Activated T-helper 2 cell treated with anti-CD3 and anti-CD28 coated beads, Interferon-gamma antibody, Interleukin-2, Interleukin-4, amounts not matched to agents 10 μg/mL and 5 μg/mL and 100 μg/mL, durations not matched to agents 14 hours and 24 hours and 36 hours (primary cell): ENCODE measurements at regions of chr19 and their contacts with region 1.

Region 1: DNA sequence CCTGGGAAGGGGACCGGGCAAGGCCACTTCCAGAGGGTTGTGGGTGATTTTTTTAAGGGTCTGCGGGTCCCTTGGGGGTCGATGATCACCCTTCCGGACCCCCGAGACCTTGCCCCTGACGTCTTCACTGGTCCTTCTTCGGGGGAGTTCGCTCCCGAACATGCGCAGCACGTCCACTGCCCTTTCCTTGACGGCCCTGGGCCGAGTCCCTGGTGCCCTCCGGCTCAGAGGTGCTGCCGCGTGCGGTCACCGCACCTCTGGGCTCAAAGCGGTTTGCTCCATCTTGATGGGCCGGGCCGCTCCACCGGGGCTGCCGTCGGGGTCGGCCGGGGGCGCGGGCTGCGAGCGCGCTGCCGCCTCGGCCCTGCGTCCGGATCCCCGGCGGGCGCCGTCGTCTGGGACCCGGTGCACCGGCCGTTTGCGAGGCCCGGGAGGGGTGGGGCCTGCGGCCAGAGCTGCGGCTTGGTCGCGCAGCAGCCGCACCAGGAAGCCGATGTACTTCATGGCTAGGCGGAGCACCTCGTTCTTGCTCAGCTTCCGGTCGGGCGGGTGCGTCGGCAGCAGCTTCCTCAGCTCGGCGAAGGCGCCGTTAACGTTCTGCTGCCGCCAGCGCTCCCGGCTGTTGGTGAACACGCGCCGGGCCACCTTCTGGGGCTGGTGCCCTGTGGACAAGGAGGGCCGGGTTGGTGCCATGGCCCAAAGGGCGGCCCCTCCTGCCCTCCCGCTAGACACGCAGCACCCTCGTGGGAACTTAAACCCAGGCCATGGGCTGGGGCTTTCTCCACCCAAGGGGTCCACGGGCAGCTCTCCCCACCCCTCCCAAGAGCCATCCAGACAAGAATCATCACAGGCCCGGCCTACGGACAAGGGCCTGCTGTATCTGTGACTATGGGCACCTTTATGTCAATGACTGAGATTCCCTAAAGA is 3.3 kb downstream of the LYL1 start:
- DNase-seq: peak; percentile 83
- H3K4me3 Mint-ChIP-seq: peak overlapping the region; percentile 84
- H3K27ac Mint-ChIP-seq: peak overlapping the region; percentile 92
- H3K4me1 Mint-ChIP-seq: peaks cover 43% of the 10 kb centered on the region
- H3K27me3 Mint-ChIP-seq: peaks cover 26% of the 10 kb centered on the region

Region 2: GRCh38 chr19:12617646-12618045 is 481.7 kb before region 1 on chr19:
- intact Hi-C with region 1: no loop called
- DNase-seq: no peak
- H3K4me3 Mint-ChIP-seq: no peak overlapping the region
- H3K27ac Mint-ChIP-seq: no peak overlapping the region
- H3K4me1 Mint-ChIP-seq: peaks cover 19% of the 10 kb centered on the region
- H3K27me3 Mint-ChIP-seq: no peaks in the 10 kb centered on the region

Region 3: GRCh38 chr19:12838182-12838885 is 261.0 kb before region 1 on chr19 and contains the start of gene MAST1:
- intact Hi-C with region 1: loop called (anchors 5 kb)
- DNase-seq: peak; percentile 51
- H3K4me3 Mint-ChIP-seq: peak within 1 kb of the TSS; percentile 72
- H3K27ac Mint-ChIP-seq: peak within 1 kb of the TSS; percentile 21
- H3K4me1 Mint-ChIP-seq: peaks cover 34% of the 10 kb centered on the region
- H3K27me3 Mint-ChIP-seq: peaks cover 60% of the 10 kb centered on the region
- total RNA-seq, gene MAST1: 5.2 and 6.5 TPM in 2 replicates

Region 4: DNA sequence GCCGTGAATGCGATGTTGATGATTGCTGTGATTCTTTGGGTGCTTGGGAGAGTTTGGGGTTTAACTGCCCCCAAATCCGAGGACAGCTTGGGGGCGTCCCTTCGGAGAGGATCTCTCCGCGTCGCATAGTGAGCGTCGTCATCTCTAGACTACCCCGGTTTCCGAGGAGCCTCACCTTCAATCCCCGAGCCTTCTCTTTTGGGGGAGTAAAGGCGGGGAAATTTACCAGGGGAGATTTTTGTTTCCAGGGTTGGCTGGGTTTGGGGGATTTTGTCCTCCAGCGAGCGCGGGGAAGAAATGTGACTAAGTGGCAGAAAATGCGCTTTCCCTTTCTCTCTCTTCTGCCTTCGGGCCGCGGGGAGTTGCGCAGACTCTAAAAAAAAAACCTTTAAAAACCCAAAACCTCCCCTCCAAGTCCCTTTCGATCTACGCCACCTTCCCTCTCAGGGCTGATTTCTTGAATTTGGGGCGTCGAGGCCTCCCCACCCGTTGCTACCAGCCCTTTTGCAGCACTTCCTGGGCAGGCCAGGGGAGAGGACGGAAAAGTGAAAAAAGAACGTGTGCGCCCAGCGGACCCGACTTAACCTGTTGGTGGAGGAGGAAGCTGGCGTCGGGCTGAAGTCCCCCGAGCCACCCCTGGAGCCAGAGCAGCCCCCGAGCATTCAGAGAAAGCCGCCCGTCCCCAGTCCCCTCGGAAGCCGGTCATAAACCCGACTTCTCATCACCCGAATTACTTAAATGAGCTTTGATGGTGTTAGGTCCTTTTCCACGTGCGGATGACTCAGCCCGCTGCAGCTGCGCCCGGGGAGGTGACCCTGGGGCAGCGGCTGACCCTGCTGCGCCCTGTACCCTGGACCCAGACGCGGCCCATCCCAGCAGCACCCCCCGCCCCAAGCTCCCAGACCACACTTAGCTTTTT is 86.4 kb before region 1 on chr19:
- intact Hi-C with region 1: loop called (anchors 1 kb)
- DNase-seq: no peak
- H3K4me3 Mint-ChIP-seq: peak overlapping the region; percentile 68
- H3K27ac Mint-ChIP-seq: peak overlapping the region; percentile 51
- H3K4me1 Mint-ChIP-seq: peaks cover 13% of the 10 kb centered on the region
- H3K27me3 Mint-ChIP-seq: peaks cover 74% of the 10 kb centered on the region

Region 5: DNA sequence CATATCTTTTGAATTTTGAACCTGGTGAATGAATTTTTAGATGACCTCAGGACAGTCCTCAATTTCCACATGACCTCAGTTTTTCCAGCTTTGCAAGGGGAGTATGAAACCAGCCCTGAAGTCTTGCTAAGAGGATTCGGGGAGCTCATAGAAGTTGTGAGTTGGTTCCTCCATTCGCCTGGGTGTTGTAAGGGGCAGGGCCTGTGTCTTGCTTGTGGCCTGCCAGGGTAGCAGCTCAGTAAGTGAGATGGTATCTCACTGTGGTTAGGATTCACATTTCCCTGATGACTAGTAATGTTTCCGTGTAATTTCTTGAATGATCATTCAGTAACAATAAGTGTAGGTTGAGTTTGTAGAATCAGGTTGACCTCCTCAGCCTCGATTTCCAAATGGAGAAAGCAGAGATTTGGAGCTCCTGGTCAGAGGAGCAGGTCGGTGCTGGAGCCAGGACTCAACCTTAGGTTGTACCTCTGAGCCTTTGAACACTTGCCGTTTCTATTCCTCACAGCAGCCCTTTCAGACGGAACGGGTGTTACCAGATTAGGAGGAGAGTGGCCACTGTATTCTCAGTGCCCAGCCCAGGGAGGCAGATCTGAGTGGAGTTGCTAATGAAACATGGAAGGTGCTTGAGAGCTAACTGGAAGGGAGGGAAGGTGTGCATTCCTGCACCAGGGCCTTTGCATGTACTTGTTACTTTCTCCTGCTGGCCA is 33.3 kb after region 1 on chr19:
- intact Hi-C with region 1: loop called (anchors 2 kb)
- DNase-seq: peak; percentile 70
- H3K4me3 Mint-ChIP-seq: peak overlapping the region; percentile 78
- H3K27ac Mint-ChIP-seq: peak overlapping the region; percentile 98
- H3K4me1 Mint-ChIP-seq: peaks cover 42% of the 10 kb centered on the region
- H3K27me3 Mint-ChIP-seq: no peaks in the 10 kb centered on the region

Region 6: DNA sequence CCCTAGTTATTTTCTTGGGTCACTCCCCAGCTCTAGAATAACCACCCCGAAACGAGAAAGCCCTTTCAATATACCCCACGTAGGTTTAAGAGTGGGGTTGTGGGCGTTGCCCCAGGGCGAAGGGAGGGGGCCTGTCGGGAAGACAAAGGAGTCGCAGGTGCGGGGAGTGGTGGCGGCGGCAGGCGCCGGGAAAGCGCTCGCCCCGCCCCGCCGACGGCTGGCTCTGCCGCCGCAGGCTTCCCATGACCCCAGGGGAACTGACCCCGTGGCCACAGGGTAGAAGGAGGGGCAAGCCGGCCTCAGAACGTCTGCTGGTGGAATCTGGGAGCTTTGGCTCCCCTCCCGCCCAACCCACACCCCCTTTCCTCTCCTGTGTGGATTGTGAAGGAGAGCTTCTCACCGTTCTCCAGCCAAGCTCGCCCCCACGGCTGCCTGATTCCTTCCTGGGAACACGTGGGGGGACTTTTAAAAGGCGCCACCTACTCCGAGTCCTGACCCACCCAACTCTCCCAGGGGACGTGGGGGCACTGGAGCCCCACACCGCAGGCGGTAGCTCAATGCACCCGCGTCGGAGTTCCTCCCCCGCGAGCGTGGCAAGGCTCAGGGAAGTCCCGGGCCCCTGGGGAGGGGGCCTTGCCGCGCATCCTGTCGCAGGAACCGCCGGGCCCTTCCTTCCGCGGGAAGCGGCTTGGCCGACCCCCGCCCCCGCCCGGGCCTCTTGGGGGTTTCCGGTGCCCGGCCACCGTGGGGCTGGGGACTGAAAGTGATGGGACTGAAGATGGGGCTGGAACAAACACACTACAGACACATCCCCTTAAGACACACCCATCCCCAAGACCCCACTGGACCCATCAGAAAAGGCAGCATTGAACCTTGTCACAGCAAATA is 56.4 kb after region 1 on chr19:
- intact Hi-C with region 1: loop called (anchors 2 kb)
- DNase-seq: peak; percentile 76
- H3K4me3 Mint-ChIP-seq: peak overlapping the region; percentile 96
- H3K27ac Mint-ChIP-seq: peak overlapping the region; percentile 99
- H3K4me1 Mint-ChIP-seq: peaks cover 32% of the 10 kb centered on the region
- H3K27me3 Mint-ChIP-seq: no peaks in the 10 kb centered on the region